ENCODE measurements at regions of chr4 and their contacts with region 1.

Region 1: DNA sequence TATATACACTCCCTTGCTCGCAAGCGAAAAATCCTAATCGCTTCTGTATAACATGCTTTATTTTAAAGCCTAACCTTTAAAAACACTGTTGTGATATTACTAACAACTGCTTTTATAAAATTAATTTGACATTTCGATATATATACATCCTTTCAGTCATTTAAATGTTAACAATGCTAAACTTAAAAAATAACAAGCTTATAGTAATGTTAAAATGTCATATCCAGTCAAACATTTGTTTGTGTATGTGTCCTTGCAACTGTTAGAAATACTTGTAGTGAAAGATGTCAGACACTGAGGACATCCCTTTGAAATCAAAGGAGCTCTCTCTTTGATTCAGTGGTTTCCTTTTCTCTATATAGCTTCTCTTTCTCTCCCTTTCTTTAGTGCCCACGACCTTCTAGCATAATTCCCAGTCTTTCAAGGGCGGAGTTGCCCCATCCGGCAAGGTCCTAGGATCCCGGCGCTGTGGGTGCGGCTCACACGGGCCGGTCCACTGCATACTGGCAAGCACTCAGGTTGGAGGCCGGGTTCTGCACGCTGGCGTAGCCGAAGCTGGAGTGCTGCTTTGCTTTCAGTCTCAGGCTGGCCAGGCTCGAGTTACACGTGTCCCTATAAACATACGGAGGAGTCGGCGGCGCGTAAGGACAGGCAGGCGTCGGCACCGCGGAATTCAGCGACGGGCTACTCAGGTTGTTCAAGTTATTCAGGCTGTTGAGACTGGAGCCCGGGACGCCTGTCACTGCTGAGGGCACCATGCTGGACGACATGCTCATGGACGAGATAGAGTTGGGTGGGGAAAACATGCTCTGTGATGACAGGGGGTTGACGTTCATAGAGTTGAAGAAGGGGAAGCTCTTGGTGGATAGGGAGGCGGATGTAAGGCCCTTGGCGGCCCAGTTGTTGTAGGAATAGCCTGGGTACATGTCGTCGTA is 5.0 kb downstream of the PITX2 start:
- DNase-seq: no peak
- H3K4me3 ChIP-seq: peak overlapping the region in 2 of 4 experiments; percentile 14 to 39; a peak in 5 of 8 replicates
- H3K27ac ChIP-seq: no peak overlapping the region
- H3K4me1 ChIP-seq: peaks cover 7 to 34% (median 26%) of the 10 kb centered on the region in 4 experiments
- H3K27me3 ChIP-seq: peaks cover 67 to 99% (median 91%) of the 10 kb centered on the region in 4 experiments
- CTCF ChIP-seq: no peak
- EP300 ChIP-seq: no peak
- POLR2A ChIP-seq: no peak
- RAD21 ChIP-seq: no peak

Region 2: GRCh38 chr4:110631584-110632505 is 13.9 kb after region 1 on chr4:
- CTCF ChIA-PET with region 1: interaction called, 17 read pairs
- POLR2A ChIA-PET with region 1: interaction called, 14 read pairs
- DNase-seq: peak in 1 of 2 experiments; percentile 89
- H3K4me3 ChIP-seq: peak overlapping the region; percentile 40 to 66 (median 52)
- H3K27ac ChIP-seq: no peak overlapping the region
- H3K4me1 ChIP-seq: peaks cover 0 to 29% (median 13%) of the 10 kb centered on the region in 4 experiments; a peak in 6 of 7 replicates
- H3K27me3 ChIP-seq: peaks cover 69 to 100% (median 91%) of the 10 kb centered on the region in 4 experiments
- CTCF ChIP-seq: peak in 2 of 3 experiments; percentile 87 to 96; a peak in 3 of 4 replicates
- EP300 ChIP-seq: no peak
- POLR2A ChIP-seq: no peak
- RAD21 ChIP-seq: peak; percentile 96 to 98

Region 3: GRCh38 chr4:110639207-110640090 is 21.5 kb after region 1 on chr4:
- CTCF ChIA-PET with region 1: interaction called, 17 read pairs
- POLR2A ChIA-PET with region 1: interaction called, 13 read pairs
- DNase-seq: peak in 1 of 2 experiments; percentile 65
- H3K4me3 ChIP-seq: peak overlapping the region; percentile 20 to 47 (median 26); a peak in 5 of 8 replicates
- H3K27ac ChIP-seq: no peak overlapping the region
- H3K4me1 ChIP-seq: peaks cover 14 to 35% (median 18%) of the 10 kb centered on the region in 4 experiments
- H3K27me3 ChIP-seq: peaks cover 37 to 85% (median 75%) of the 10 kb centered on the region in 4 experiments
- CTCF ChIP-seq: no peak
- EP300 ChIP-seq: no peak
- POLR2A ChIP-seq: no peak
- RAD21 ChIP-seq: no peak